CD8-positive, alpha-beta T cell (primary cell): ENCODE measurements at regions of chr2 and their contacts with region 1.

Region 1: GRCh38 chr2:161808564-161808963 is 184.3 kb downstream of the SLC4A10 start:
- DNase-seq: no peak
- ATAC-seq: no peak
- H3K4me3 ChIP-seq: no peak overlapping the region
- H3K4me3 Mint-ChIP-seq: no peak overlapping the region
- H3K27ac ChIP-seq: no peak overlapping the region
- H3K27ac Mint-ChIP-seq: no peak overlapping the region
- H3K4me1 ChIP-seq: no peaks in the 10 kb centered on the region
- H3K4me1 Mint-ChIP-seq: no peaks in the 10 kb centered on the region
- H3K27me3 ChIP-seq: no peaks in the 10 kb centered on the region
- H3K27me3 Mint-ChIP-seq: no peaks in the 10 kb centered on the region
- CTCF ChIP-seq: no peak

Region 2: DNA sequence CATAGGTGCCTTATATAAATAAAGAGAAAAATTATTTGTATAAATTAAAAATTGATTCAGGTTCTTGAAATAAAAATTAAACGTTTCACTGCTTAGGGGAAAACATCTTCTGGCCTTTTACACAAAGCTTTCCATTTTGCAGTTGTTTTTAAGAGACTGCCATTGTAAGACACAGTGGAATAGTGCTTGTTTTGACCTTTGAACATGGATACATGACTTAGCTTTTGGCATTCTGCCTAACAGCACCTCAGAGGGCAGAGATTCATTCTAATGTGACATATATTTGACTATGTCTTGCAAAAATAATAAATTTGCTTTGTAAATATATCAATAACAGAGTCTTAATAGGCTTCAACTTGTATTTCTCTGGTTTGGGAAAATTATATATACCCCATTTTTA is 42.2 kb before region 1 on chr2:
- CTCF ChIA-PET with region 1: no interaction called
- POLR2A ChIA-PET with region 1: no interaction called
- intact Hi-C with region 1: loop called in 1 of 2 experiments (anchors 1 kb)
- DNase-seq: no peak
- ATAC-seq: no peak
- H3K4me3 ChIP-seq: no peak overlapping the region
- H3K4me3 Mint-ChIP-seq: no peak overlapping the region
- H3K27ac ChIP-seq: no peak overlapping the region
- H3K27ac Mint-ChIP-seq: no peak overlapping the region
- H3K4me1 ChIP-seq: no peaks in the 10 kb centered on the region
- H3K4me1 Mint-ChIP-seq: no peaks in the 10 kb centered on the region
- H3K27me3 ChIP-seq: no peaks in the 10 kb centered on the region
- H3K27me3 Mint-ChIP-seq: no peaks in the 10 kb centered on the region
- CTCF ChIP-seq: no peak